A673 (cell line): ENCODE measurements at regions of chr15 and their contacts with region 1.

Region 1: GRCh38 chr15:84955089-84955848 is 26.4 kb upstream of the PDE8A start:
- DNase-seq: peak; percentile 92
- H3K4me3 ChIP-seq: peak overlapping the region; percentile 20
- H3K27ac ChIP-seq: peak overlapping the region; percentile 69
- H3K4me1 ChIP-seq: peaks cover 26% of the 10 kb centered on the region
- H3K27me3 ChIP-seq: no peaks in the 10 kb centered on the region
- CTCF ChIP-seq: peak; percentile 93

Region 2: GRCh38 chr15:84588053-84588874 is 367.0 kb before region 1 on chr15:
- CTCF ChIA-PET with region 1: no interaction called
- POLR2A ChIA-PET with region 1: interaction called, 17 read pairs
- intact Hi-C with region 1: no loop called
- DNase-seq: peak; percentile 91
- H3K4me3 ChIP-seq: peak overlapping the region; percentile 39
- H3K27ac ChIP-seq: no peak overlapping the region
- H3K4me1 ChIP-seq: peaks cover 12% of the 10 kb centered on the region
- H3K27me3 ChIP-seq: no peaks in the 10 kb centered on the region
- CTCF ChIP-seq: peak; percentile 70

Region 3: GRCh38 chr15:85010386-85011159 is 55.3 kb after region 1 on chr15:
- CTCF ChIA-PET with region 1: interaction called, 4 read pairs
- POLR2A ChIA-PET with region 1: interaction called, 3 read pairs
- intact Hi-C with region 1: loop called (anchors 1 kb)
- DNase-seq: peak; percentile 71
- H3K4me3 ChIP-seq: no peak overlapping the region
- H3K27ac ChIP-seq: peak overlapping the region; percentile 64
- H3K4me1 ChIP-seq: peaks cover 43% of the 10 kb centered on the region
- H3K27me3 ChIP-seq: no peaks in the 10 kb centered on the region
- CTCF ChIP-seq: peak; percentile 57

Region 4: DNA sequence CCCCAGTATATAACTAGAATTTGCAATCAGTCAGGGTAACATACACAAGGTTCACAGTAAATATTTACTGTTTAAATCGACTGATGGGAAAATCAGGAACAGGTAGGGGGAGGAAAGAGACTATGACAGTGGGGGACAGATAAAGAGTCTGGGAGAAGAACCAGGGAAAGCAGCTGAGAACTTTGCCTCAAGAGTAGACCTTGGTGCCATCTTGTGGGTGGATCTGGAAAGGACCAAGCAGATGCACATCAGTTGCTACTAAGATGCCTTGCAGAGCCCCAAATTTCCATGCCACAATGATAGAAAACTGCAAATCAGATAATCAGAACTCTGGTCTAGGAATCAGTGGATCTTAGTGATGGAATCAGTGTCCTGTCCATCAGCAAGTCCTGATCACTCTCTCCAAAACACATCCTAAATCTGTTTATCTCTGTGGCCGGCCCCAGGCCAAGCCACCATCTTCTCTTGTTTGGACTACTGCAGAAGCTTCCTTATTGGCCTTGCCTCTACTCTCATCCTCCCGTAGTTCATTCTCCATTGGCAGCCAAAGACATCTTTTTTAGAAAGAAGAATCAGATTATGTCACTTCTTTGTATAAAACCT is 89.1 kb after region 1 on chr15:
- CTCF ChIA-PET with region 1: interaction called, 21 read pairs
- POLR2A ChIA-PET with region 1: no interaction called
- intact Hi-C with region 1: loop called (anchors 1 kb)
- DNase-seq: peak; percentile 77
- H3K4me3 ChIP-seq: no peak overlapping the region
- H3K27ac ChIP-seq: no peak overlapping the region
- H3K4me1 ChIP-seq: peaks cover 47% of the 10 kb centered on the region
- H3K27me3 ChIP-seq: no peaks in the 10 kb centered on the region
- CTCF ChIP-seq: peak; percentile 67

Region 5: GRCh38 chr15:85142312-85142711 is 187.0 kb after region 1 on chr15:
- CTCF ChIA-PET with region 1: interaction called, 10 read pairs
- POLR2A ChIA-PET with region 1: no interaction called
- intact Hi-C with region 1: no loop called
- DNase-seq: peak; percentile 70
- H3K4me3 ChIP-seq: no peak overlapping the region
- H3K27ac ChIP-seq: no peak overlapping the region
- H3K4me1 ChIP-seq: peaks cover 11% of the 10 kb centered on the region
- H3K27me3 ChIP-seq: no peaks in the 10 kb centered on the region
- CTCF ChIP-seq: no peak

Region 6: GRCh38 chr15:85168642-85169173 is 213.4 kb after region 1 on chr15:
- CTCF ChIA-PET with region 1: interaction called, 5 read pairs
- POLR2A ChIA-PET with region 1: no interaction called
- intact Hi-C with region 1: loop called (anchors 1 kb)
- DNase-seq: peak; percentile 55
- H3K4me3 ChIP-seq: peak overlapping the region; percentile 33
- H3K27ac ChIP-seq: no peak overlapping the region
- H3K4me1 ChIP-seq: peaks cover 5% of the 10 kb centered on the region
- H3K27me3 ChIP-seq: no peaks in the 10 kb centered on the region
- CTCF ChIP-seq: peak; percentile 74